ENCODE measurements at regions of chr18 and their contacts with region 1.

Region 1: DNA sequence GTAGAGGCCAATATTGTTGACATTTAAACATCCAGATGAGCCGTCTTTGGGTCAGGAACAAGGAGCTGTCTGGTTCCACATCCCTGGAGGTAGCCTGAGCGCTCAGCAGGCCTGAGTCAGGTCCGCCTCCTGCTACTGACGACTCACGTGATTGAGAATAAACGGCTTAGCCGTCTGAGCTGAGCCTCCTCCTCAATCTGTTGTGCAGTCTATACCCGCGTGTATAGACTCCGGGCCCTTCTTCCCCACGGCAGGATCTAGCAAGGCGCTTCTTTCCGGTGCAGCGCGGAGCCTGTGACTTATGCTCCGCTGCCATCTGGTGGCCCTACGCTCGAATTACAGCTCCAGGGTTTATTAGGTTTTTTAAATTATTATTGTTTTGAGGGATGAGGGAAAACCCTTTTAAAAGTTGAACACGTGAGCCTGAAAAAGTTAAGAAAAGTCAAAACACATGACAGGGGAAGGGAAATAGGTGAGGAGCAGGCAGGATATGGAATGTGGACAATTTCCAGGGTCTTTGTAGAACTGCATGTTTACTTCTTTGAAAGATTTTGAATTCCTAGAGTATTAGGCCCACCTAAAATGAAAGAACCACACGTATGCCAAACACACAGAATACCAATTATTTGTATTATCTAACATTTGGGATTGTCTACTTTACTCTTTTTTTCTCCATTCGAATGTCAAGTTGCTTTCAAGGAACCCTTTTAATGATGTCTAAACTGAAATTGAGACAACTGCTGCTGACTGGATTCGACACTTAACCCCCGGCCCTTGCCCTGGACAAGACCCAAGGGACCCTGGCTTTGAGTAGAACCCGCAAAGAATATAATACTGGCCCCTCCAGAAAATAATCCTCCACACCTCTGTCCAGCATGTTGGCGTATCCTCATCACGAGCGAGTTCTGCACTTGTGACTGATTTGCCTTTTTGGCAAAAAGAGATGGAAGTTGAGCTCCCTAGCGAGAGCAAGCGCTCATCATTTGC is 112.4 kb upstream of the ZNF236 start:
- DNase-seq: peak; percentile 30 to 76 (median 66)
- ATAC-seq: peak; percentile 94
- H3K4me3 ChIP-seq: no peak overlapping the region
- H3K4me3 Mint-ChIP-seq: no peak overlapping the region
- H3K27ac ChIP-seq: no peak overlapping the region
- H3K27ac Mint-ChIP-seq: no peak overlapping the region
- H3K4me1 ChIP-seq: peaks cover 4% of the 10 kb centered on the region
- H3K4me1 Mint-ChIP-seq: peaks cover 4% of the 10 kb centered on the region
- H3K27me3 ChIP-seq: no peaks in the 10 kb centered on the region
- H3K27me3 Mint-ChIP-seq: peaks cover 6% of the 10 kb centered on the region
- CTCF ChIP-seq: peak; percentile 99

Region 2: DNA sequence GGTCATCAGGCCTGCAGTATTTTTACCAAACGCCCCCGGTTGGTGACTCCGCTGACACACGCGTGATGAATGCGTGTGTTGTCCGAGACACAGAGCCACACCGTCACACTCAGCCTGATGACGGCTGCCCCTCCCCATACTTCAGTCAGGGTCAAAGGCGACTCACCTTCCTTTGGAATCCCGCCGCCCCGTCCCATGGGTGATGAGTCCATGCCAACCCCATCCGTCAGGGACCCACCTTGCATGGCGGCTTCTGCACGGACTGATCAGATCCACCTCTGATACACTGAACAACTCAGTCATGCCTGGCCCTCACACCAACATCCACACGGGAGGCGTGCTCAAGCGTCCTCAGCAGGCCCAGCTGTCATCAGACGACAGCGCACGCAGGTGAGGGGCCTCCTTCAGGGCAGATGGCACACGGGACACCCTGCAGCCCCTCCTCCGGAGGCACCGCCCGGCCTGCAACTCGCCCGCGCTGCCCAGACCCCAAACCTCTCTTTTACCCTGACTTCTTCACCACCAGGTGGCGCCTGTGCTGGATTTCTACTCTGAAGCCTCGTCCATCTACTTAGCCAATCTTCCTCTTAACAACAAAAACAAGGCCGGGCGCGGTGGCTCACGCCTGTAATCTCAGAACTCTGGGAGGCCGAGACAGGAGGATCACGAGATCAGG is 304.1 kb before region 1 on chr18:
- CTCF ChIA-PET with region 1: interaction called, 186 read pairs
- POLR2A ChIA-PET with region 1: interaction called, 4 read pairs
- intact Hi-C with region 1: loop called in 1 of 2 experiments (anchors 1 kb)
- DNase-seq: peak in 5 of 9 experiments; percentile 22 to 79 (median 51)
- ATAC-seq: no peak
- H3K4me3 ChIP-seq: no peak overlapping the region
- H3K4me3 Mint-ChIP-seq: no peak overlapping the region
- H3K27ac ChIP-seq: no peak overlapping the region
- H3K27ac Mint-ChIP-seq: no peak overlapping the region
- H3K4me1 ChIP-seq: no peaks in the 10 kb centered on the region
- H3K4me1 Mint-ChIP-seq: peaks cover 6% of the 10 kb centered on the region
- H3K27me3 ChIP-seq: no peaks in the 10 kb centered on the region
- H3K27me3 Mint-ChIP-seq: no peaks in the 10 kb centered on the region
- CTCF ChIP-seq: peak; percentile 51

Region 3: DNA sequence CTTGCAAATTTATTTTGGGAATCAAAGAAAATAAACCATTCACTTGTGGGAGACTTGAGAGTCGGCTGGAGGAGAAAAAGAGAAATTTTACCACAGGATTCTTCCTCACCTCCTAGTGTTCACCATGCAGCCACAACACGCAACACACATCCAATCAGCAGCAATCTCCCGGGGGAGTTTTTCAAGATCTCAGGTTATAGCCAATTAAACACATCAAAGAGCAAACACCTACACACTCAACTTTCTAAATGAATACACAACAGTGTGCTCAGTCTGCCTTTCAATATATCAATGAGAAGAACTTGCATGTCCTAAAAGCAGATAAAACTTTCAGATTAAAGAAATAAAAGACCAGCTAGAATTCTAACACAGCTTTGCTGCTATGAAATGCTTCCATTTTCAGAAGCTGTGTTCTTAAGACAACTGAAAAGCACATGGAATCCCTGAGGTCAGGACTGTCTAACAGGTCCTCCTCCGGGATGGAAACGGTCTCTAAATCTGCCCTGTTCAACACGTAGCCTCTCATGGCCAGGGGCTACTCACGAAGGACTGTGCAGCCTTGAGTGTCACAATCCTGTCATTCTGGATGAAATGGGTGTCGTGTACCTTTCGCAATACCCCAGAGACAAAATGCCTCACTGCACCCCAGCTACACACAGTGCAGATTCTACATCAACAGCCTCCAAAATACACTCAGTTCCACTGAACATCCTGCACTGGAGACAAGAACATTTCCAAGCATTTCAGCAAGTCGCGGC is 299.1 kb before region 1 on chr18:
- CTCF ChIA-PET with region 1: interaction called, 17 read pairs
- POLR2A ChIA-PET with region 1: no interaction called
- intact Hi-C with region 1: loop called in 1 of 2 experiments (anchors 1 kb)
- DNase-seq: no peak
- ATAC-seq: no peak
- H3K4me3 ChIP-seq: no peak overlapping the region
- H3K4me3 Mint-ChIP-seq: no peak overlapping the region
- H3K27ac ChIP-seq: no peak overlapping the region
- H3K27ac Mint-ChIP-seq: no peak overlapping the region
- H3K4me1 ChIP-seq: no peaks in the 10 kb centered on the region
- H3K4me1 Mint-ChIP-seq: peaks cover 13% of the 10 kb centered on the region
- H3K27me3 ChIP-seq: no peaks in the 10 kb centered on the region
- H3K27me3 Mint-ChIP-seq: no peaks in the 10 kb centered on the region
- CTCF ChIP-seq: no peak

Region 4: GRCh38 chr18:76633588-76634269 is 76.2 kb before region 1 on chr18:
- CTCF ChIA-PET with region 1: no interaction called
- POLR2A ChIA-PET with region 1: no interaction called
- intact Hi-C with region 1: no loop called
- DNase-seq: no peak
- ATAC-seq: no peak
- H3K4me3 ChIP-seq: no peak overlapping the region
- H3K4me3 Mint-ChIP-seq: no peak overlapping the region
- H3K27ac ChIP-seq: no peak overlapping the region
- H3K27ac Mint-ChIP-seq: no peak overlapping the region
- H3K4me1 ChIP-seq: no peaks in the 10 kb centered on the region
- H3K4me1 Mint-ChIP-seq: no peaks in the 10 kb centered on the region
- H3K27me3 ChIP-seq: no peaks in the 10 kb centered on the region
- H3K27me3 Mint-ChIP-seq: peaks cover 28% of the 10 kb centered on the region
- CTCF ChIP-seq: no peak

Region 5: DNA sequence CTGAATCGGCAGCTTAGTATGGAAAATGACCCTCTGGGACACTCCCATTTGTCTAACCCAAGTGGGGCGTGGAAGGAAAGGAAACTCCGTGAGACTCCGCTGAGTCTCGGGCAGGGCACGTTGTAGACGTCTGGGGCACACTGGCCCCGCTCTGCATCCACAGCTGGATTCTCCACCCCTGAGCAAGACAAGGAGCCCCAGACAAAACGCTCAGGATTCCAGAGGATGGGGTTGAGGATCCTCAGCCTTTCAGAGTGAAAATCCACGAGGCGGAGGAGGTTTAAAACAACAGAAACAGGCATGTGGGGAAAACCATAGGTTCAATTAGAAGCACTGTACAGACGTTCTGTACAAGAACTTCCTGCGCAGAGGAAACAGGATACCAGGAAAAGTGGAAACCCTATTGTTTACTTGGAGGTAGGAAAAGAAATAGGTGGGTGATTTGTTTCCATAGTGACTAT is 12.5 kb before region 1 on chr18:
- CTCF ChIA-PET with region 1: interaction called, 27 read pairs
- POLR2A ChIA-PET with region 1: no interaction called
- intact Hi-C with region 1: no loop called
- DNase-seq: no peak
- ATAC-seq: no peak
- H3K4me3 ChIP-seq: no peak overlapping the region
- H3K4me3 Mint-ChIP-seq: no peak overlapping the region
- H3K27ac ChIP-seq: no peak overlapping the region
- H3K27ac Mint-ChIP-seq: no peak overlapping the region
- H3K4me1 ChIP-seq: no peaks in the 10 kb centered on the region
- H3K4me1 Mint-ChIP-seq: no peaks in the 10 kb centered on the region
- H3K27me3 ChIP-seq: peaks cover 4 to 7% of the 10 kb centered on the region in 2 experiments
- H3K27me3 Mint-ChIP-seq: peaks cover 51% of the 10 kb centered on the region
- CTCF ChIP-seq: no peak

Region 6: DNA sequence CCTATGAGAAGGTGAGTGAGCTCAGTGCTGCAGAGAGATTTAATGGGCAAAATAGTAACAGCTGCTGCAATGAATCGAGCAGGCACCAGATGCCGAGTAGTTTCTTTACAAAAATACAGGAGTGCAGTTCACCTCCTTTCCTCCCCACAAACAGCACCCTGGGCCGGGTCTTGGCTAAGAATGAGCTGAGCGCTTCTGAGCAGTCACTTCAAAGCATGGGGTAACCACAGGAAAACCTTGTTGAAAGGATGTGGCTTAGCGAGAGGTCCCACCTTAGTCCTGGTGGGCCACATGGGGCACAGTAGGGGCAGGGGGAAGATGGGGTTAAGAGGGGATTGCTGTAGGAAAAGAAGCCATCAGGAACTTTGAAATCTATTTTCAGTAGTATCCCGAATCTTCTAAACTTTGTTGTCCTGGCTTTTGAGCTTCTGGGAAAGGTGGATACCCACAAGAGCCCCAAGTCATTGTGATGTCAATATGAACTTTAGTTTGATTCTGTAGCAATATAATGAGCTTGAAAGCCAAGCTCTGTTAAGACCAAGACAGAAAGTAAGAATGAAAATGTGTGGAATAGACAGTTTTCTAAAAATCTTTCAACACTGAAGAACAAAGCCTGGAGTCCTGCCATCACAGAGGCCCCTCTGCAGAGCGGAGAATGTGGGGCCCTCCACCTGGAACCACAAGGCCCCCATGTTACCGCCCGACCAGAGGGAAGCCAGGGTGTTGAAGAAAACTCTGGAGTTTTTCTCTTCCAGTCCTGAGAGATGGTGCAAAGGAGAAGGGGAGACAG is 11.4 kb after region 1 on chr18:
- CTCF ChIA-PET with region 1: interaction called, 23 read pairs
- POLR2A ChIA-PET with region 1: interaction called, 3 read pairs
- intact Hi-C with region 1: no loop called
- DNase-seq: peak; percentile 38 to 87 (median 71)
- ATAC-seq: peak; percentile 95
- H3K4me3 ChIP-seq: peak overlapping the region in 1 of 2 experiments; percentile 32
- H3K4me3 Mint-ChIP-seq: peak overlapping the region; percentile 68
- H3K27ac ChIP-seq: peak overlapping the region in 1 of 2 experiments; percentile 5
- H3K27ac Mint-ChIP-seq: peak overlapping the region; percentile 80
- H3K4me1 ChIP-seq: peaks cover 50% of the 10 kb centered on the region
- H3K4me1 Mint-ChIP-seq: peaks cover 45% of the 10 kb centered on the region
- H3K27me3 ChIP-seq: no peaks in the 10 kb centered on the region
- H3K27me3 Mint-ChIP-seq: peaks cover 12% of the 10 kb centered on the region
- CTCF ChIP-seq: no peak

Region 7: GRCh38 chr18:77567205-77567604 is 857.3 kb after region 1 on chr18:
- CTCF ChIA-PET with region 1: no interaction called
- POLR2A ChIA-PET with region 1: no interaction called
- intact Hi-C with region 1: no loop called
- DNase-seq: no peak
- ATAC-seq: no peak
- H3K4me3 ChIP-seq: no peak overlapping the region
- H3K4me3 Mint-ChIP-seq: no peak overlapping the region
- H3K27ac ChIP-seq: no peak overlapping the region
- H3K27ac Mint-ChIP-seq: no peak overlapping the region
- H3K4me1 ChIP-seq: no peaks in the 10 kb centered on the region
- H3K4me1 Mint-ChIP-seq: no peaks in the 10 kb centered on the region
- H3K27me3 ChIP-seq: no peaks in the 10 kb centered on the region
- H3K27me3 Mint-ChIP-seq: peaks cover 10% of the 10 kb centered on the region
- CTCF ChIP-seq: no peak